Activated CD4-positive, alpha-beta memory T cell treated with anti-CD3 and anti-CD28 coated beads for 36 hours (primary cell): ENCODE measurements at regions of chr2 and their contacts with region 1.

Region 1: GRCh38 chr2:110812726-110813645 is 80.6 kb downstream of the ACOXL start:
- DNase-seq: no peak
- H3K4me3 Mint-ChIP-seq: no peak overlapping the region
- H3K27ac Mint-ChIP-seq: no peak overlapping the region
- H3K4me1 Mint-ChIP-seq: peaks cover 8% of the 10 kb centered on the region
- H3K27me3 Mint-ChIP-seq: peaks cover 40% of the 10 kb centered on the region

Region 2: GRCh38 chr2:110853507-110853906 is 40.5 kb after region 1 on chr2:
- CTCF ChIA-PET with region 1: interaction called, 32 read pairs
- POLR2A ChIA-PET with region 1: no interaction called
- intact Hi-C with region 1: loop called (anchors 1 kb)
- DNase-seq: peak; percentile 72
- H3K4me3 Mint-ChIP-seq: no peak overlapping the region
- H3K27ac Mint-ChIP-seq: no peak overlapping the region
- H3K4me1 Mint-ChIP-seq: peaks cover 46% of the 10 kb centered on the region
- H3K27me3 Mint-ChIP-seq: peaks cover 39% of the 10 kb centered on the region

Region 3: GRCh38 chr2:110948027-110948674 is 135.2 kb after region 1 on chr2:
- CTCF ChIA-PET with region 1: no interaction called
- POLR2A ChIA-PET with region 1: no interaction called
- intact Hi-C with region 1: no loop called
- DNase-seq: no peak
- H3K4me3 Mint-ChIP-seq: no peak overlapping the region
- H3K27ac Mint-ChIP-seq: no peak overlapping the region
- H3K4me1 Mint-ChIP-seq: no peaks in the 10 kb centered on the region
- H3K27me3 Mint-ChIP-seq: peaks cover 9% of the 10 kb centered on the region